ENCODE measurements at regions of chr20 and their contacts with region 1.

Region 1: GRCh38 chr20:12740647-12741046 is 268.1 kb upstream of the SPTLC3 start:
- DNase-seq: no peak
- H3K4me3 ChIP-seq: no peak overlapping the region
- H3K4me3 Mint-ChIP-seq: no peak overlapping the region
- H3K27ac Mint-ChIP-seq: no peak overlapping the region
- H3K4me1 ChIP-seq: no peaks in the 10 kb centered on the region
- H3K4me1 Mint-ChIP-seq: no peaks in the 10 kb centered on the region
- H3K27me3 ChIP-seq: 0 out of 2 replicates have a peak, but pooled peaks cover 1% of the 10 kb centered on the region
- H3K27me3 Mint-ChIP-seq: peaks cover 14% of the 10 kb centered on the region
- CTCF ChIP-seq: peak in 1 of 2 experiments; percentile 18

Region 2: GRCh38 chr20:12570371-12570770 is 170.3 kb before region 1 on chr20:
- CTCF ChIA-PET with region 1: interaction called, 3 read pairs
- POLR2A ChIA-PET with region 1: no interaction called
- intact Hi-C with region 1: loop called (anchors 10 kb)
- DNase-seq: peak; percentile 55 to 60
- H3K4me3 ChIP-seq: no peak overlapping the region
- H3K4me3 Mint-ChIP-seq: no peak overlapping the region
- H3K27ac Mint-ChIP-seq: no peak overlapping the region
- H3K4me1 ChIP-seq: no peaks in the 10 kb centered on the region
- H3K4me1 Mint-ChIP-seq: no peaks in the 10 kb centered on the region
- H3K27me3 ChIP-seq: no peaks in the 10 kb centered on the region; the same call in 1 of the 2 replicates
- H3K27me3 Mint-ChIP-seq: peaks cover 13% of the 10 kb centered on the region
- CTCF ChIP-seq: peak; percentile 57 to 84

Region 3: GRCh38 chr20:12860619-12861247 is 120.1 kb after region 1 on chr20:
- CTCF ChIA-PET with region 1: no interaction called
- POLR2A ChIA-PET with region 1: no interaction called
- intact Hi-C with region 1: no loop called
- DNase-seq: no peak
- H3K4me3 ChIP-seq: no peak overlapping the region
- H3K4me3 Mint-ChIP-seq: no peak overlapping the region
- H3K27ac Mint-ChIP-seq: no peak overlapping the region
- H3K4me1 ChIP-seq: no peaks in the 10 kb centered on the region
- H3K4me1 Mint-ChIP-seq: no peaks in the 10 kb centered on the region
- H3K27me3 ChIP-seq: no peaks in the 10 kb centered on the region
- H3K27me3 Mint-ChIP-seq: peaks cover 10% of the 10 kb centered on the region
- CTCF ChIP-seq: no peak